Activated B cell treated with CpG ODN at 0.5 μM for 24 hours (primary cell): ENCODE measurements at regions of chr14 and their contacts with region 1.

Region 1: DNA sequence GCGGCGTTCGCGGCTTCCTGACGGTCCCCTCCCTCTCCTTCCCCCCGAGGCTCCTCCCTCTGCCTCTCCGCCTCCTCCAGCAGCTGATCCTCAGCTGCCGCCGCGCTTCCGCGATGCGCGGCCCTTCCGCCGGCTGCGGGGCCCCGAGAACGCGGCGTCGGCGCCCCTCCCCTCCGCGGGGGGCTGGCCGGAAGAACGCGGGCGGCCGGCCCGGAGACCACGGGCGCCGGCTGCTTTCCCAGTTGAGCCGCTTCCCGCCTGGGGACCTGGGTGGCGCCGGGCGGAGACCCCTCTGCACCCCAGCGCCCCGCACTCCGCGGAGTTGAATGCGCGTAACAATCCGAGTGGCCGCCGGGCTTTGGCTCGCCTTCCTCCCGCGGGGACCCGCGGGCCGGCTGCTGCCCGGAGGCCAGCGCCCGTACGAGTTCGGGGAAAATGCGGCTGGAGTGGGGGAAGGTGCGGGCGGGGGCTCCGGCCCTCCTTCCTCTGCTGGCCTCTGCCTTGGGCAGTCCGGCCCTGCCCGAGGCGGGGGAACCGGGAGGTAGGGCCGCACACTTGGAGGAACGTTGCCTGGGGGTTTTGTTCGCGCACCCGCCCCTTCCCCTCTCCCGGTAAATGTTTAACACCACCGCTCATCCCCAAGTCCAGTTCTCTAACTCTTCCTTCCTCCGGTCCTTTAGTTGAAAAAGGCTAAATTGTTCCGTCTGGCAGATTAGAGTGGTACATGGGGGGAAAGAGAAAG is 383 bp upstream of the DCAF5 start:
- DNase-seq: peak; percentile 81
- ATAC-seq: peak; percentile 93
- H3K4me3 Mint-ChIP-seq: peak overlapping the region; percentile 95
- H3K27ac Mint-ChIP-seq: peak overlapping the region; percentile 88
- H3K4me1 Mint-ChIP-seq: peaks cover 28% of the 10 kb centered on the region
- H3K27me3 Mint-ChIP-seq: no peaks in the 10 kb centered on the region
- CTCF ChIP-seq: no peak

Region 2: DNA sequence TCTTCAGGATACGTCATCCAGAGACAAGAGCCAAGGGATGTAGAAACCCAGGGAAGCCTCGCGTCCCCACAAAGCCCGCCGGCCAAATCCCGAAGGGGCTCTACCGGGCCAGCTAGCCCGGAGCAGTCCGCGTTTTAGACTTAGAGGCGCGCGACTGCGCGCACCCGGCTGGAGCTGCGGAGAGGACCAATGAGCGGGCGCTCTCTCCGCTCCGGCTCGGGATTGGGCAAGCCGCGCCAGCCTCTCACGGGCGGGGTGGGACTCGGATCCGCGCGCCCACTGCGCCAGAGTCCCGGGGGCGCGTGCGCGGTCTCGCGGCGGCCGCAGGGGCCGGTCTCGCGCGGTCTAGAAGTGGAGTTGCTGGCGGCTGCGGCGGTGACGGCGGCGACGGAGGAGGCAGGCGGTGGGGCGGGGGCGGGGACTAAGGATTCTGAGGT is 1912.3 kb before region 1 on chr14:
- CTCF ChIA-PET with region 1: no interaction called
- POLR2A ChIA-PET with region 1: no interaction called
- intact Hi-C with region 1: loop called (anchors 5 kb)
- DNase-seq: peak; percentile 91
- ATAC-seq: peak; percentile 94
- H3K4me3 Mint-ChIP-seq: peak overlapping the region; percentile 93
- H3K27ac Mint-ChIP-seq: peak overlapping the region; percentile 81
- H3K4me1 Mint-ChIP-seq: peaks cover 16% of the 10 kb centered on the region
- H3K27me3 Mint-ChIP-seq: no peaks in the 10 kb centered on the region
- CTCF ChIP-seq: no peak

Region 3: GRCh38 chr14:69107407-69108003 is 45.8 kb before region 1 on chr14:
- CTCF ChIA-PET with region 1: no interaction called
- POLR2A ChIA-PET with region 1: no interaction called
- intact Hi-C with region 1: no loop called
- DNase-seq: no peak
- ATAC-seq: peak; percentile 50
- H3K4me3 Mint-ChIP-seq: no peak overlapping the region
- H3K27ac Mint-ChIP-seq: no peak overlapping the region
- H3K4me1 Mint-ChIP-seq: no peaks in the 10 kb centered on the region
- H3K27me3 Mint-ChIP-seq: no peaks in the 10 kb centered on the region
- CTCF ChIP-seq: no peak

Region 4: GRCh38 chr14:69129264-69129880 is 23.9 kb before region 1 on chr14:
- CTCF ChIA-PET with region 1: interaction called, 11 read pairs
- POLR2A ChIA-PET with region 1: interaction called, 6 read pairs
- intact Hi-C with region 1: loop called (anchors 1 kb)
- DNase-seq: peak; percentile 24
- ATAC-seq: peak; percentile 76
- H3K4me3 Mint-ChIP-seq: no peak overlapping the region
- H3K27ac Mint-ChIP-seq: peak overlapping the region; percentile 54
- H3K4me1 Mint-ChIP-seq: peaks cover 35% of the 10 kb centered on the region
- H3K27me3 Mint-ChIP-seq: no peaks in the 10 kb centered on the region
- CTCF ChIP-seq: peak; percentile 92

Region 5: DNA sequence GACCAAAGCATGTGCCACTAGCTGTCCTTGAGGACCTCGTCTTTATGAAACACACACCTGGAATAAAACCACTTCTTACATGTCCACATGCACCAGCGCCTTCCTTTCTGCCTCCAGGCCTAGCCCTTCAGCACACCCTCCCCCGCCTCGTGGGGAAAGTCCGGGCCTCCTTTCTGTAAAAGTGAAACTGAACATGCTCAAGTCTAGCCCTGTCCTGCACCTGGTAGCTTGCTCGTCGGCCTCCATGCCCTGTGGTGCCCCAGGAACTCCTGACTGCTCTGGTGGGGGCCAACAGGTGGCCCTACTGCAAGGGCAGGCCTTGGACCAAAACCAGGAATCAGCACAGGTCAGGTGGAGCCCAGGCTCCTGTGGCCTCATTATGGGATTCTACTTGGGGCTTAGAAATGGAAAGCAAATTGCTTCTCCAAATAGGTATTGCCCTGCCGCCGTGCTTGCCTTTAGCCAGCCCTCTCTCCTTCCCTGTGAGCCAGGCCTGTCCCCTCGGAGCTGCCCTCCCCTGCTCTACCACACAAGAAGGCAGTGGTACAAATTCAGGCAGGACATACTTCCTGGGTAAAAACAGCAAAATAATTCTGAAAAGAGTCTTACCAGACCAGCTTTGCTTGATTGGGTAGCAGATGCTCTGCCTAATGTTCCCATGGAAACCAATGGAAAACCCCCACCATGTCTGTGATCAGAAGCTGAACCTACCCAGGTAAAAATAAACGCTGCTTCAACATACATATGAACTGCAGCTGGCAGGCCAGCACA is 201.3 kb after region 1 on chr14:
- CTCF ChIA-PET with region 1: no interaction called
- POLR2A ChIA-PET with region 1: no interaction called
- intact Hi-C with region 1: loop called (anchors 5 kb)
- DNase-seq: peak; percentile 60
- ATAC-seq: peak; percentile 88
- H3K4me3 Mint-ChIP-seq: peak overlapping the region; percentile 86
- H3K27ac Mint-ChIP-seq: peak overlapping the region; percentile 99
- H3K4me1 Mint-ChIP-seq: peaks cover 52% of the 10 kb centered on the region
- H3K27me3 Mint-ChIP-seq: no peaks in the 10 kb centered on the region
- CTCF ChIP-seq: no peak

Region 6: GRCh38 chr14:69535230-69535848 is 382.0 kb after region 1 on chr14:
- CTCF ChIA-PET with region 1: no interaction called
- POLR2A ChIA-PET with region 1: no interaction called
- intact Hi-C with region 1: no loop called
- DNase-seq: no peak
- ATAC-seq: no peak
- H3K4me3 Mint-ChIP-seq: no peak overlapping the region
- H3K27ac Mint-ChIP-seq: no peak overlapping the region
- H3K4me1 Mint-ChIP-seq: no peaks in the 10 kb centered on the region
- H3K27me3 Mint-ChIP-seq: peaks cover 25% of the 10 kb centered on the region
- CTCF ChIP-seq: no peak

Region 7: DNA sequence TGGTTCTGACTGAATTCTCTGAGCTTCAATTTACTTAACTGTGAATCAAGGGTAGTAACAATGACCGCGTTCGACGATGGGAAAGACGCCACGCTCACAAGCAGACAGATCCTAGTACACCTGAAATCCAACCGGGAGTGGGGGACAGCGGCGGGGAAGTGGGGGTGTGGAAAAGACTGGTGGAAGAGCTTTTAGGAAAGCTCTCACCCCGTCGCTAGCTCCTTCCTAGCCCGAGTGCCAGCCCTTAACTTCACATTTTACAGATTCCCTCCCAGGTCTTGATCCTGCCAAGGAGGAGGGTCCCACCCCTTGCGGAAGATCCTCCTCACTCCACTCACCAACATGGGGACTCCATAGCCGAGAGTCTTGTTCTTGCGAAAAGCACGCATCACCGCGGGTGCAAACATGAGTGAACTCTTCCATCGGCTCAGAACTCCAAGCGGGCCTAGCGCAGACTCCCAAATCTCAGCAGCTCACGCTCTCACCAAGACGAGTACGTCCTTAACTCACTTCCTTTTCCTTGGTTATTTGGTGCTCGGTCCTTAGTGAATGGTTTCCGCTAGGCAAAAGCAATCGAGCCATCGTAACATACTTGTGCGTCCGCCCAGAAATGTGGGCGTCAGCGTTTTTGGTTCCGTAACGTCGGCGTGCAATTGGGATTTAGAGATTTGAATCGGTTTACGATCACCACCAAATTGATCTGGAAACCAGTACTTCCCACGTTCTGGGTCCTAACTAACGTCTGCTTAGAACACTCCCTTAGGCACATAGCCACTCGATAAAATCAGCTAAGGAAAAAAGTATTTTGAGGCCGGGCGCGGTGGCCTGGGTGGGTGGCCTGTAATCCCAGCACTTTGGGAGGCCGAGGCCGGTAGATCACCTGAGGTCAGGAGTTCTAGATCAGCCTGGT is 1206.1 kb after region 1 on chr14 and contains the start of gene COX16:
- CTCF ChIA-PET with region 1: no interaction called
- POLR2A ChIA-PET with region 1: no interaction called
- intact Hi-C with region 1: loop called (anchors 1 kb)
- DNase-seq: peak; percentile 72
- ATAC-seq: peak; percentile 93
- H3K4me3 Mint-ChIP-seq: peak within 1 kb of the TSS; percentile 99
- H3K27ac Mint-ChIP-seq: peak within 1 kb of the TSS; percentile 92
- H3K4me1 Mint-ChIP-seq: peaks cover 42% of the 10 kb centered on the region
- H3K27me3 Mint-ChIP-seq: peaks cover 2% of the 10 kb centered on the region
- CTCF ChIP-seq: no peak
- total RNA-seq, gene COX16: 48.8 and 50.7 TPM in 2 replicates